Activated naive CD4-positive, alpha-beta T cell treated with anti-CD3 and anti-CD28 coated beads for 36 hours (primary cell): ENCODE measurements at regions of chr5 and their contacts with region 1.

Region 1: GRCh38 chr5:127313847-127314473 is 23.4 kb downstream of the MEGF10 start:
- DNase-seq: peak; percentile 81
- H3K4me3 Mint-ChIP-seq: no peak overlapping the region
- H3K27ac Mint-ChIP-seq: no peak overlapping the region
- H3K4me1 Mint-ChIP-seq: peaks cover 4% of the 10 kb centered on the region
- H3K27me3 Mint-ChIP-seq: peaks cover under 1% of the 10 kb centered on the region

Region 2: GRCh38 chr5:126438267-126438666 is 875.7 kb before region 1 on chr5:
- CTCF ChIA-PET with region 1: no interaction called
- intact Hi-C with region 1: no loop called
- DNase-seq: no peak
- H3K4me3 Mint-ChIP-seq: no peak overlapping the region
- H3K27ac Mint-ChIP-seq: peak overlapping the region; percentile 77
- H3K4me1 Mint-ChIP-seq: peaks cover 31% of the 10 kb centered on the region
- H3K27me3 Mint-ChIP-seq: no peaks in the 10 kb centered on the region

Region 3: DNA sequence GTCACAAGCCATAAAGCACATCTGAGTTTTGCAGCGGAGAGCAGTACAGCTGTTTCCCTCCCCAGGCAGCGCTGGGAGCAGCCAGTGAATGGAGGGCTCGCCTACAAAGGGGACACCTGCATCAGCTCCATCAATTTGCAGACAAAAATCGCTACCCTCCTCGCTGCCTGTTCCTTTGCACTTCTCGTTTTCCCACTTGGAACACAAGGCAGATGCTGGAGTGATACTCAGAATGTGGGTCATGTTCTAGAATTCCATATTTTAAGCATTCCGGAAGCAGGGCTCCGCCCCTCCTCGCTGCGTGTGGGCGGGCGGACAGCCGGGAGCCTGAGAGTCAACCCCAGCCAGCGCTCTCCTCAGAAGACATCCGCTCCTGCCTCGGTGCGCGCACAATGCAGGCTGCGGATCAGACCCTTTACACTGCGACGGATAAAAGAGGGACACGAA is 444.9 kb before region 1 on chr5:
- CTCF ChIA-PET with region 1: no interaction called
- intact Hi-C with region 1: loop called (anchors 5 kb)
- DNase-seq: peak; percentile 51
- H3K4me3 Mint-ChIP-seq: peak overlapping the region; percentile 36
- H3K27ac Mint-ChIP-seq: no peak overlapping the region
- H3K4me1 Mint-ChIP-seq: peaks cover 10% of the 10 kb centered on the region
- H3K27me3 Mint-ChIP-seq: no peaks in the 10 kb centered on the region

Region 4: DNA sequence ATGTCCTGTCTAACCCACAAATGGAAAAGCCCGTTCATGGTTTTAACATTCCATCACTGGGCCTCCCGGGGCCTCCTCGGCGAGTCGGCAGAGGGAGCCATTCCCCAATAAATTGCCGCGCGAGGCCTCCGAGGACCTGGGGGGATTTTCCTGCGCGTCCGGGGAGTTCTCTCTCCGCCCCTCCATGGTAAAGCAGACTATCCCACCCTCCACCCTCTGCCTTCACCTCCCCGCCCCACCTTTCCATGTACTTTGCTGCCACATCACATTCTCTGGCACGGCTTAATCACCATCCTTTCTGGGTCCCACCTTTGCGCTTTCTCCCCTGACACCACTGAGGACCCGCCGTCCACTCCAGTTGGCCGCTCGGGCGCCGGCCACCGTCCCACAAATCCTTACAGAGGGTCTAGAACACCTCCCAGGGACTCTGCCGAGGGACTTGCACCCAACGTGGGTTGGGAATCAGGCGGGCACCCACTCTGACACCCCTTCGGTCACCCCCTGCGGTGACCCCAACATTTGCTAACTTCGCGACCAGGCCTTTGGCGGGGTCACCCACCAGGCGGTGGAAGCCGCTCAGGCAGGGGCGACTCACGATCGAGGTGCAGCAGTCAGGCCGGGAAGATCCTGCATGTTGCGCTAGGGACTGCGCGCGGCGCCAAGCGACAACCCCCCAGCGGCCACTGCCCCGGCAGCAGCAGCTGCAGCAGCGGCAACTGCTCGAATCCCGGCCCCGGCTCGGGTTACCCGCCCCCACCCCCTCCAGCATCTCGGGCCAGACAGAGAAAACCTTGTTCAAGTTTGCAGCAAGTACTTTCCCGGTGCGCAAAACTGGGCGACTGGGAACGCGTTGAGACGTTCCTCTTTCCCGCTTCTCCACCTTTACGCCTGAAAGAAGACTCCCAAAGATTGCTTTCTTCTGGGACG is 23.7 kb before region 1 on chr5 and contains the start of gene MEGF10:
- CTCF ChIA-PET with region 1: interaction called, 8 read pairs
- intact Hi-C with region 1: loop called (anchors 1 kb)
- DNase-seq: peak; percentile 42
- H3K4me3 Mint-ChIP-seq: peak within 1 kb of the TSS; percentile 19
- H3K27ac Mint-ChIP-seq: no peak within 1 kb of the TSS
- H3K4me1 Mint-ChIP-seq: peaks cover 13% of the 10 kb centered on the region
- H3K27me3 Mint-ChIP-seq: peaks cover 49% of the 10 kb centered on the region
- total RNA-seq, gene MEGF10: not detected